HCT116 (cell line): ENCODE measurements at regions of chr13 and their contacts with region 1.

Region 1: DNA sequence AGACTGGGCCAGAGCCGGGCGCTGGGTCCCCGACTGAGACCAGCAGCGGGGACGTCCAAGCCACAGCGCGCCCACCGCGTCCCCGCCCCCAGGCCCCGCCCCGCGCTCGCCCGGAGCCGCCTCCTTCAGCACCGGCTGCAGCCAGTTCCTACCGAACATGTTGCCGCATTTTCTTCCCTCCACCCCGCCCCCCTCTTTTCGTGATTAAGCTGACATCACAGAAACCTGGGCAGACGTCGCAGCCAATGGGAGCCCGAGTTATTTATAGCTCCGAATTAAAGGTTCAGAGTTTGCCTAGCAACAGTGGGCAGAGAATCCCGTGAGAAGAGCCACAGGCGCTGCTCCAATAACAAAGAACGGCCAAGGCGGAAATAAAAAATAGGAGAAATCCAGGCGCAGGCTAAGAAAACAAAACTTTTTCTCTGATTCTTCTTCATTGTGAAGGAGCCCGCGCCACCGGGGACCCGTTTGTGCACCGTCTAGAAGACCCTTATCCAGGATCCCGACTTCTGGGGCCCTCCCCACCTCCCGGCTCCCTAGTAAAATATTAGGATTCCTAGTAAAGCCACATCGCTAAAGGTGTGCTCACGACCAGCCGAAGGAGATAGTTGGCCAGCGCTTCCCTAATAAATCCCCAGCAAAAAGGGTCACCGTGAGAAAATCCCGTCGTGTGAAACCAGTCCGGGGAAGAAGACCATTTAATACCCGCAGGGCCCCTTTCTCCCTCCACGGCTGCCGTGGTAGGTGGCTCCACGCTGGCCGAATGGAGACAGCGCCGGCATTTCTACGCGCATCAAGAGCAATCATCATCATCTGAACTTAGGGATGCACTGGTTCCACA is 61.7 kb downstream of the SERP2 start:
- DNase-seq: peak; percentile 92
- ATAC-seq: peak; percentile 59
- H3K4me3 ChIP-seq: peak overlapping the region; percentile 90 to 94
- H3K27ac ChIP-seq: peak overlapping the region; percentile 91
- H3K4me1 ChIP-seq: peaks cover 33 to 66% of the 10 kb centered on the region in 2 experiments
- H3K27me3 ChIP-seq: no peaks in the 10 kb centered on the region
- CTCF ChIP-seq: no peak
- POLR2A ChIP-seq: peak; percentile 15
- RAD21 ChIP-seq: no peak

Region 2: DNA sequence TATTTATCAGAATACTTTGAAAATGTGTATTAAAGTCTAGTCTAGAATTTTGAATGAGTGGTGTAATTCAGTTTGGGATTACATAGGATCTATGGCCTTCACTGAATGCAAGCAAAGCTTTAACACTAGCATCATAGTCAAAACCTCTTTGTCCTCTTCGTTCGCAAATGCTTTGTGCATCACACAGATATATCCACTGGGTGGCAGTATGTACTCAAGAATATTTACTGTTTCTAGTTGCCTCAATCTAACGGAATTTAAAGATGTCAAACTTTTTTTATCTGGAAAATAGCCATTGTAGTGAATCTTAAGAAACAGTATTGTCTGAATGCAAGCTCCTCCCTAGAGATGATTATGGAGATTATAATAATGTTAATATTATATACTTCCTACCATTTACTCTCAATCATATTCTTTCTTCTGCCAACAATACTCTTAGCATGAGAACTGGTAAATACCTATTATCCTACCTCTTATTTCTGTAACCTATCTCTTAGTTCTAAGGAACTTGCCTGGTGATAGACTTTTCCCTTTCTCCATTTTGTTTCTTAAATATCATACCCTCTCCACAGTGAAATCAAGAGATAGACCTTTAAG is 529.8 kb before region 1 on chr13:
- CTCF ChIA-PET with region 1: interaction called, 91 read pairs
- POLR2A ChIA-PET with region 1: interaction called, 39 read pairs
- RAD21 ChIA-PET with region 1: interaction called, 3 to 9 read pairs
- intact Hi-C with region 1: loop called (anchors 1 kb)
- DNase-seq: peak; percentile 58
- ATAC-seq: peak; percentile 83
- H3K4me3 ChIP-seq: no peak overlapping the region
- H3K27ac ChIP-seq: no peak overlapping the region
- H3K4me1 ChIP-seq: peaks cover 0 to 7% of the 10 kb centered on the region in 2 experiments; a peak in 2 of 4 replicates
- H3K27me3 ChIP-seq: no peaks in the 10 kb centered on the region
- CTCF ChIP-seq: peak; percentile 62 to 83 (median 62)
- POLR2A ChIP-seq: no peak
- RAD21 ChIP-seq: peak; percentile 87

Region 3: DNA sequence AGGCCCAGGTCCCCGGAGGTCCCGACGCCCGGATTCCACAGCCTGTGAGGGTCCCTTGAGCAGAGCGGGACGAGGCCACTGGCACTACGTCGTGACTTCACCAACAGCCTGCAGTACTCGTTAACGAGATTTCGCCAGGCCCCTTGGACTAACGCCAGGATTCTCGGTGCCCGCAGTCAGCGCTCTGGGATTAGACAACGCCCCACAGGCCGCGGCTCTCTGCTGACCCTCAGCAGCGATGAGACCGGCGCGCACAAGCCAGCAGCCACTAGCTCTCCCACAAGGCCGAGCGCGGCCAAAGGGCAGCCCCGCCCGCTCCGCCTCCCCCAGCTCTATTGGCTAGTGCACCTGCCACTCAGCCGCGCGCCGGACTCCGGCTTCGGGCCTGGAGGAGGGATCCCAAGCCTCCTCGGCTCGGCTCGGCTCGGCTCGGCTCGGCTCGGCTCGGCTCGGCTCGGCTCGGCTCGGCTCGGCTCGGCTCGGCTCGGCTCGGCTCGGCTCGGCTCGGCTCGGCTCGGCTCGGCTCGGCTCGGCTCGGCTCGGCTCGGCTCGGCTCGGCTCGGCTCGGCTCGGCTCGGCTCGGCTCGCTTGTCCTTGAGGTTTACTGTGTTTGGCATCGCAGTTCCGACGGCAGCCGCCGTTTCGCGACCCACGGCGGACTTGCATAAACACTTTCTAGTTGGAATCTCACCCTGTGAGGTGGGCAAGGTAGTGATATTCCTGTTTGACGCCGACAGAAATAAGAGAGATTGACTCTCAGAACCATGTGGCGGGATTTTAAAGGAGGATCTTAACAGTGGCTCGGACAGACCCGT is 293.4 kb before region 1 on chr13:
- CTCF ChIA-PET with region 1: interaction called, 7 read pairs
- POLR2A ChIA-PET with region 1: interaction called, 12 read pairs
- RAD21 ChIA-PET with region 1: interaction called in 1 of 2 experiments, 11 read pairs
- intact Hi-C with region 1: loop called (anchors 1 kb)
- DNase-seq: peak; percentile 85
- ATAC-seq: peak; percentile 98
- H3K4me3 ChIP-seq: peak overlapping the region; percentile 66 to 72
- H3K27ac ChIP-seq: peak overlapping the region; percentile 89
- H3K4me1 ChIP-seq: peaks cover 18 to 33% of the 10 kb centered on the region in 2 experiments
- H3K27me3 ChIP-seq: no peaks in the 10 kb centered on the region
- CTCF ChIP-seq: no peak
- POLR2A ChIP-seq: peak; percentile 81
- RAD21 ChIP-seq: no peak; the same call in 1 of the 2 replicates

Region 4: GRCh38 chr13:44237276-44237767 is 198.0 kb before region 1 on chr13:
- CTCF ChIA-PET with region 1: interaction called, 27 read pairs
- POLR2A ChIA-PET with region 1: interaction called, 147 read pairs
- RAD21 ChIA-PET with region 1: interaction called in 1 of 2 experiments, 8 read pairs
- intact Hi-C with region 1: no loop called
- DNase-seq: no peak
- ATAC-seq: no peak
- H3K4me3 ChIP-seq: no peak overlapping the region
- H3K27ac ChIP-seq: no peak overlapping the region
- H3K4me1 ChIP-seq: peaks cover 10 to 44% of the 10 kb centered on the region in 2 experiments
- H3K27me3 ChIP-seq: no peaks in the 10 kb centered on the region
- CTCF ChIP-seq: no peak
- POLR2A ChIP-seq: no peak
- RAD21 ChIP-seq: no peak

Region 5: DNA sequence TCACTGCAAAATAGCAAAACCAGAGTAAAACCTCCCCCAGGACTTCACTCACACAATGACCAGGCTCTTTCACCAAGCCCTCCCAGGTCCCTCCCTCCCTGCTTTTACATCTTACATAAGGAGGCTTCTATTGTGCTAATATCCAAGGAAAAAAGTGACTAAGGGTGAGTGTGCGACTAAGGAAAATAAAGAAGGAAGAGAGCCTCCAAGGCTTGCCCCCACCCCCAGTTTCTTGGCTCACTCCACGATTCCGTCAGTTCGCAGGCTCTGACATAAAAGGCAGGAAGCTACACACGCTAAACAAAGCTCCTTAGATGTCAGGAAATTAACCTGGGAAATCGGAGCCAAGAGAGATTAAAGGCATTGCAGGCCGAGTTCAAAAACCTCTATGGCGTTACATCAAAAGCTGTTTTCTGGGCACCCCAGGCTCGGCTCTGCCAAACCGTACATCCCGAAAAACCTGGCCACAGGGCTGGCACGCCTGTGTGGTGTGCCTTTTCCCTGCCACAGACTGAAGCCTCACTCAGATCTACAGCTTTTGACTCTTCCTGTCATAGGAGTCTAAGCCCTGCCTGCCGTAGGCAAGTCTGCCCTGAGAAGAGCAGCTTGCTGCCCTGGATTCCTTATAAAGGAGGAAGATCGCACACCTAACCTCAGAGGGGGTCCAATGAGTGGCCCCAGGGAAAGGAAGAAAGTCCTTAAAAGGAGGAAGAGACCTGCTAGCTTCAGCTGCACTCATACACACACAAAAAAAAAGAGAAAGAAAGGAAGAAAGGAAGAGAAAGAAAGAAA is 128.8 kb before region 1 on chr13:
- CTCF ChIA-PET with region 1: interaction called, 3 read pairs
- POLR2A ChIA-PET with region 1: interaction called, 172 read pairs
- RAD21 ChIA-PET with region 1: interaction called, 6 to 7 read pairs
- intact Hi-C with region 1: loop called (anchors 1 kb)
- DNase-seq: peak; percentile 99
- ATAC-seq: peak; percentile 84
- H3K4me3 ChIP-seq: peak overlapping the region; percentile 5 to 35
- H3K27ac ChIP-seq: peak overlapping the region; percentile 96
- H3K4me1 ChIP-seq: peaks cover 66 to 99% of the 10 kb centered on the region in 2 experiments
- H3K27me3 ChIP-seq: no peaks in the 10 kb centered on the region
- CTCF ChIP-seq: no peak
- POLR2A ChIP-seq: no peak
- RAD21 ChIP-seq: no peak

Region 6: GRCh38 chr13:44385847-44386246 is 49.5 kb before region 1 on chr13:
- CTCF ChIA-PET with region 1: no interaction called
- POLR2A ChIA-PET with region 1: no interaction called
- RAD21 ChIA-PET with region 1: no interaction called
- intact Hi-C with region 1: no loop called
- DNase-seq: no peak
- ATAC-seq: no peak
- H3K4me3 ChIP-seq: no peak overlapping the region
- H3K27ac ChIP-seq: no peak overlapping the region
- H3K4me1 ChIP-seq: 0 out of 4 replicates have a peak, but pooled peaks cover 0 to under 1% of the 10 kb centered on the region in 2 experiments
- H3K27me3 ChIP-seq: no peaks in the 10 kb centered on the region
- CTCF ChIP-seq: no peak
- POLR2A ChIP-seq: no peak
- RAD21 ChIP-seq: no peak

Region 7: GRCh38 chr13:44422755-44423532 is 12.4 kb before region 1 on chr13:
- CTCF ChIA-PET with region 1: no interaction called
- POLR2A ChIA-PET with region 1: interaction called, 28 read pairs
- RAD21 ChIA-PET with region 1: interaction called in 1 of 2 experiments, 6 read pairs
- intact Hi-C with region 1: no loop called
- DNase-seq: no peak
- ATAC-seq: no peak
- H3K4me3 ChIP-seq: no peak overlapping the region
- H3K27ac ChIP-seq: no peak overlapping the region
- H3K4me1 ChIP-seq: no peaks in the 10 kb centered on the region
- H3K27me3 ChIP-seq: no peaks in the 10 kb centered on the region
- CTCF ChIP-seq: no peak
- POLR2A ChIP-seq: no peak
- RAD21 ChIP-seq: no peak

Region 8: DNA sequence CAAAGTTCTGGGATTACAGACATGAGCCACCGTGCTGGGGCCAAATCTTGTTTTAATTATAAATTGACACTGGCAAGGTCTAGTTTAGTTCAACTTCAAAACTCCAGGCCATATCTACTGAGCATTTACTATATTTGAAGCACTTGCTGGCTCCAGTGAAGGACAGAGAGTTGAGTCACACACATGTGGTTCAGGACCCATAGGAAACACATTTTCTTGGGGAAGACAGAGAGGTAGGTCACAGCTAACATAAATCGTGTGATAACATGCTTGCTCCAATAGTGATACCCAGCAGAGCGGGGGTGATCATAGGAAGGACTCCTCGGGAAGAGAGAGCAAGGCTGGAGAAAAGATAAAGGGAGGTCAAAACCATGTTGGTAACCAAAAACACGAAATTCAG is 311.3 kb after region 1 on chr13:
- CTCF ChIA-PET with region 1: no interaction called
- POLR2A ChIA-PET with region 1: no interaction called
- RAD21 ChIA-PET with region 1: no interaction called
- intact Hi-C with region 1: no loop called
- DNase-seq: no peak
- ATAC-seq: no peak
- H3K4me3 ChIP-seq: no peak overlapping the region
- H3K27ac ChIP-seq: no peak overlapping the region
- H3K4me1 ChIP-seq: no peaks in the 10 kb centered on the region
- H3K27me3 ChIP-seq: no peaks in the 10 kb centered on the region
- CTCF ChIP-seq: no peak
- POLR2A ChIP-seq: no peak
- RAD21 ChIP-seq: no peak

Region 9: DNA sequence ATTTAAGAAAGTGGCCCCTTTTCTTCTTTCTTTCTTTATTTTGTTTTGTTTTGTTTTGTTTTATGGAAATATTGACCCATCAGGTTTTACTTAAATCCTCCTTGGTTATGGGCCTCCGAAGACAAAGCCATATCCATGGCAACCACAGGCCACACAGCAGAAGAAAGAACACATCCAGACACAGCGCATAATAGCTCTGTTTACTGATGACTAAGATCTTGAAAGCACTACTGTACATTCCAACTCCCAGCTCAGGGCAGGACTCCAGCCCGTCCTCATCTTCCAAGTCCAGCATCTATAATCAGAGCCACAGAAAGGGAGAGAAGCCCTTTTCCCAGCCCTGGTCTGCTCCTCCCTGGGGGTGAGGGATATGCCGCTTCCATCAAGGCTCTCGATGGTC is 469.6 kb after region 1 on chr13:
- CTCF ChIA-PET with region 1: no interaction called
- POLR2A ChIA-PET with region 1: no interaction called
- RAD21 ChIA-PET with region 1: no interaction called
- intact Hi-C with region 1: no loop called
- DNase-seq: no peak
- ATAC-seq: no peak
- H3K4me3 ChIP-seq: no peak overlapping the region
- H3K27ac ChIP-seq: no peak overlapping the region
- H3K4me1 ChIP-seq: no peaks in the 10 kb centered on the region
- H3K27me3 ChIP-seq: no peaks in the 10 kb centered on the region; the same call in 1 of the 2 replicates
- CTCF ChIP-seq: no peak
- POLR2A ChIP-seq: no peak
- RAD21 ChIP-seq: no peak